ENCODE measurements at regions of chr2 and their contacts with region 1.

Region 1: GRCh38 chr2:135851858-135852257 is 14.9 kb upstream of the LCT start:
- DNase-seq: no peak
- ATAC-seq: no peak
- H3K4me3 Mint-ChIP-seq: no peak overlapping the region
- H3K27ac Mint-ChIP-seq: no peak overlapping the region
- H3K4me1 Mint-ChIP-seq: no peaks in the 10 kb centered on the region
- H3K27me3 Mint-ChIP-seq: no peaks in the 10 kb centered on the region
- CTCF ChIP-seq: no peak

Region 2: GRCh38 chr2:135839713-135840112 is 12.1 kb before region 1 on chr2:
- CTCF ChIA-PET with region 1: interaction called, 4 read pairs
- POLR2A ChIA-PET with region 1: interaction called, 30 read pairs
- intact Hi-C with region 1: no loop called
- DNase-seq: no peak
- ATAC-seq: peak; percentile 32
- H3K4me3 Mint-ChIP-seq: no peak overlapping the region
- H3K27ac Mint-ChIP-seq: no peak overlapping the region
- H3K4me1 Mint-ChIP-seq: peaks cover 35% of the 10 kb centered on the region
- H3K27me3 Mint-ChIP-seq: no peaks in the 10 kb centered on the region
- CTCF ChIP-seq: no peak

Region 3: GRCh38 chr2:135870571-135870970 is 18.7 kb after region 1 on chr2:
- CTCF ChIA-PET with region 1: interaction called, 7 read pairs
- POLR2A ChIA-PET with region 1: interaction called, 14 read pairs
- intact Hi-C with region 1: no loop called
- DNase-seq: no peak
- ATAC-seq: peak; percentile 52
- H3K4me3 Mint-ChIP-seq: no peak overlapping the region
- H3K27ac Mint-ChIP-seq: peak overlapping the region; percentile 55
- H3K4me1 Mint-ChIP-seq: peaks cover 52% of the 10 kb centered on the region
- H3K27me3 Mint-ChIP-seq: no peaks in the 10 kb centered on the region
- CTCF ChIP-seq: no peak